HepG2 (cell line): ENCODE measurements at regions of chr2 and their contacts with region 1.

Region 1: DNA sequence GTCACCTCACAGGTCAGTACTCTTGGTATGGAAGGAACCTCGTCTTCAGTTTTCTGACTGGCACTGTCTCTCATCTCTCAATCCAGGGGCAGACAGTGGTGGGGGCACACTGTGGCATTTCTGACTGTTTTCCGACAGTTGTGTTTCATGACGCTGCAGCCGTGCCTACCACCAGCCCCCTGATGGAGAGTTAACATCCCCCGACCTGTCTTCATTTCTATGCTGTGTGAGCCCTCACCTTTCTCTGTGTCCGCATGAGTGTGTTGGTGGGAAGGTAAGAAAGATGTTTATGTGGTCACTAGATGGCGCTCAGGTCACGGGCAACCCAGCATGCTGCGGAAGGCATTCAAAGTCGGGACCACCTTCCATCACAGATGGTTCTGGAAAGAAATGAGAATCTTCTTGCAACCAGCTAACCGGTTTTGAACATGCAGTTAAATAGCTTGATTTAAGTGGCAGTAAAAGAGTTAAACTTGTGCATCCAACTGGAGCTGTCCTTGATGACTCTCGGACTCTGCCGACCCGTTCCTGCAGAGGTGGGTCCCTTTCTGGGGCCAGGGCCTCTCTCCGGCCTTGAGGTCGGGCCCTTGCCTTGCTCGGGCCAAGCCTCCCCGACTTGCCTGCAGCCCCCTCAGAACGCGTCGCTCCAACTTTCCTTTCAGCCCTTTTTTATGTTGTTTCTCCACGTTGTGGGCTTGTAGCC is 92.4 kb downstream of the DYSF start:
- DNase-seq: peak; percentile 64
- ATAC-seq: peak; percentile 86
- H3K4me3 ChIP-seq: peak overlapping the region in 2 of 3 experiments; percentile 10 to 29; a peak in 2 of 6 replicates
- H3K27ac ChIP-seq: no peak overlapping the region
- H3K4me1 ChIP-seq: peaks cover 37% of the 10 kb centered on the region
- H3K27me3 ChIP-seq: peaks cover 2 to 31% of the 10 kb centered on the region in 2 experiments; a peak in 4 of 5 replicates
- CTCF ChIP-seq: peak; percentile 97
- EP300 ChIP-seq: no peak
- POLR2A ChIP-seq: no peak
- RAD21 ChIP-seq: peak; percentile 88

Region 2: GRCh38 chr2:71452565-71452964 is 93.2 kb before region 1 on chr2:
- CTCF ChIA-PET with region 1: no interaction called
- POLR2A ChIA-PET with region 1: no interaction called
- in situ Hi-C with region 1: no loop called
- intact Hi-C with region 1: no loop called
- DNase-seq: no peak
- ATAC-seq: peak; percentile 65
- H3K4me3 ChIP-seq: no peak overlapping the region
- H3K27ac ChIP-seq: no peak overlapping the region
- H3K4me1 ChIP-seq: peaks cover 22% of the 10 kb centered on the region
- H3K27me3 ChIP-seq: peaks cover 2 to 9% of the 10 kb centered on the region in 2 experiments; a peak in 3 of 5 replicates
- CTCF ChIP-seq: no peak
- EP300 ChIP-seq: no peak
- POLR2A ChIP-seq: no peak
- RAD21 ChIP-seq: no peak

Region 3: DNA sequence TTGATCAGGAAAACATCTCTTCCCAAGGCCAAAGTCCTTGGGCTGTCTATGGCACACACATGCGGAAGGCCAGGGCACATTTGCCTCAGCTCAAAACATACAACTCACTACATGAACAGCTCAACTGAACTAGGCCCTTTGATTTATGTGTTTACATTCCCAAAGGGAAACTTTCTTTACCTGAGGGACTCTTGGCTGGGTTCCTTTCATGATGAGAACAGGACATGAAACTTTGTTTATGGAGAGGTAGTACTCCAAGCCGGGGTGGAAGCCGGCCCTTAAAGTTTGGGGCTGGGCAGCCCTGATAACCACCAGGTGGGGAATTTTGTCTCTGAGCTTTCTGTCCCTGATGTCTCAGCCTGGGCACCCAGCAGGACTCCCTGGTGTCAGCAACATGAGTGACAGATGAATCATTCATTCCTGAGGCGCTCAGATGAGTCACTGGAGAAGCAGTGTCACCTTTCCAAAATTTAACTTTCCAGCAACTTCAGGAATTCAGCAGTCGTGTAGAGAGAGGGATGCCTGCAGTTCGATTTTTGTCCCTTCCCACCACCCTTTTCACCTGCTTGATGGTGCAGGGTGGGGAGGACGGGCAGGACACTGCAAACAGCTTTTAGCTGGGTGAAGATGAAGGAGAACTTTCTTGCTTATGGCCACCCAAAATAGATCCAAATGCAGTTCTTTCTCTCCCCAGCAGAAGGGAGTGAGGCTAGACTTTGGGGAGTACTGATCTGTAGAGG is 239.2 kb after region 1 on chr2:
- CTCF ChIA-PET with region 1: no interaction called
- POLR2A ChIA-PET with region 1: no interaction called
- in situ Hi-C with region 1: loop called (anchors 5 kb)
- intact Hi-C with region 1: no loop called
- DNase-seq: peak; percentile 33
- ATAC-seq: peak; percentile 69
- H3K4me3 ChIP-seq: no peak overlapping the region
- H3K27ac ChIP-seq: no peak overlapping the region
- H3K4me1 ChIP-seq: peaks cover 26% of the 10 kb centered on the region
- H3K27me3 ChIP-seq: peaks cover 0 to 4% of the 10 kb centered on the region in 2 experiments; a peak in 2 of 5 replicates
- CTCF ChIP-seq: no peak
- EP300 ChIP-seq: no peak
- POLR2A ChIP-seq: no peak
- RAD21 ChIP-seq: no peak

Region 4: DNA sequence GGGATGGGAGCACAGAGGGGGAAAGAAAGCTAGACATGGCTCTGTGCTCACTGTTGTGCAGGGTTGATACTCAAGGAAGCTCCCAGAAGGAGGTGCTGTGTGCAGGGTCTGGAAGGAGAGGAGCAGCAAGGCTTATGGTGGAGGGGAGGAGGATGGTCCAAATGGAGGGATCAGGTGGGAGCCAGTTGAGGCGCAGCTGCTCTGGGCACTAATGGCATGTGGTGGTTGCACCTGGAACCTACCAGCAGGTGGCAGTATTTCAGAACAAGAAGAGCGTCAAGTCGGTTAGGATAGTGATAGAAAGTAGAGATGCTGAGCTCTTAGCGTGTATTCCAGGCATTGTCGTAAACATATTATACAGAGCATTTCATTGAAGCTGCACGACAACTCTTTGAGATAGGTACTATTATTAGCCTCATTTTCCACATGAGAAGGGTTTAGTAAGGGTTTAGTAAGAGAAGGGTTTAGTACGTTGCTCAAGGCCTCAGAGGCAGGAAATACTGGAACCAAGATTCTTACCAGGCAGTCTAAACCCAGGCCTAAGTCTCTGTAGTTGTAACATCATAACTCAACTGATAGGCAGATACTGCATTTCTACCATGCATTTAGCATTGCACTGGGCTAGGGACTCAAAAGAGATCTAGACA is 378.3 kb after region 1 on chr2:
- CTCF ChIA-PET with region 1: interaction called, 3 read pairs
- POLR2A ChIA-PET with region 1: no interaction called
- in situ Hi-C with region 1: no loop called
- intact Hi-C with region 1: loop called (anchors 5 kb)
- DNase-seq: peak; percentile 76
- ATAC-seq: peak; percentile 89
- H3K4me3 ChIP-seq: no peak overlapping the region
- H3K27ac ChIP-seq: no peak overlapping the region
- H3K4me1 ChIP-seq: no peaks in the 10 kb centered on the region
- H3K27me3 ChIP-seq: peaks cover 5 to 45% of the 10 kb centered on the region in 2 experiments; a peak in 4 of 5 replicates
- CTCF ChIP-seq: peak; percentile 93
- EP300 ChIP-seq: no peak
- POLR2A ChIP-seq: no peak
- RAD21 ChIP-seq: peak; percentile 78; the same call in 1 of the 2 replicates

Region 5: DNA sequence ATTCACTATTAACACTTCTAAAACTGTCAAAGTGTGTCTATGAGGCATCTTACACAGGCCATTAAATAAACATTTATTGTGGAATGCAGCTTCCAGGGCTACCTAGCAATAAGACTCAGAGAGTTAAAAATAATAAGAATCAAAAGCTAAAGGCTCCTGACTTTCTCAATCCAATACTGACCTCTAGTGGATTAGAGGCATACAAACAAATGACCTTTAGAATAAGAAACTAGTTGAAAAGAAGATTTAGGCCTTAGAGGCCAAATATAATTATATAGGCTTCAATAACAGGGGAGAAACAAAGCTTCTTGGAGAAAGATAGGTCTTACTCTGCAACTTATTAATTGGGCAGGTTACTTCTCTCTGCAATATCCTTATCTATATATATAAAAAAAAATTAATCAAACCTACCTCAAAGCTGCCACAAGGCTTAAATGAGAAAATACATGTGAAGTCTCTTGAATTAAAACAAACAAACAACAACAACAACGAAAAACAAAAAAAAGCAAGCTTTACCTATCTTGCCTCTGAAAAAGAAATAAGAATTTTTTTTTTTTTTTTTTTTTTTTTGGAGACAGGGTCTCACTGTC is 1034.0 kb after region 1 on chr2:
- CTCF ChIA-PET with region 1: no interaction called
- POLR2A ChIA-PET with region 1: no interaction called
- in situ Hi-C with region 1: loop called (anchors 10 kb)
- intact Hi-C with region 1: loop called (anchors 1 kb)
- DNase-seq: peak; percentile 70
- ATAC-seq: no peak
- H3K4me3 ChIP-seq: no peak overlapping the region
- H3K27ac ChIP-seq: no peak overlapping the region
- H3K4me1 ChIP-seq: peaks cover 7% of the 10 kb centered on the region
- H3K27me3 ChIP-seq: no peaks in the 10 kb centered on the region
- CTCF ChIP-seq: peak; percentile 71
- EP300 ChIP-seq: no peak
- POLR2A ChIP-seq: no peak
- RAD21 ChIP-seq: peak; percentile 81

Region 6: DNA sequence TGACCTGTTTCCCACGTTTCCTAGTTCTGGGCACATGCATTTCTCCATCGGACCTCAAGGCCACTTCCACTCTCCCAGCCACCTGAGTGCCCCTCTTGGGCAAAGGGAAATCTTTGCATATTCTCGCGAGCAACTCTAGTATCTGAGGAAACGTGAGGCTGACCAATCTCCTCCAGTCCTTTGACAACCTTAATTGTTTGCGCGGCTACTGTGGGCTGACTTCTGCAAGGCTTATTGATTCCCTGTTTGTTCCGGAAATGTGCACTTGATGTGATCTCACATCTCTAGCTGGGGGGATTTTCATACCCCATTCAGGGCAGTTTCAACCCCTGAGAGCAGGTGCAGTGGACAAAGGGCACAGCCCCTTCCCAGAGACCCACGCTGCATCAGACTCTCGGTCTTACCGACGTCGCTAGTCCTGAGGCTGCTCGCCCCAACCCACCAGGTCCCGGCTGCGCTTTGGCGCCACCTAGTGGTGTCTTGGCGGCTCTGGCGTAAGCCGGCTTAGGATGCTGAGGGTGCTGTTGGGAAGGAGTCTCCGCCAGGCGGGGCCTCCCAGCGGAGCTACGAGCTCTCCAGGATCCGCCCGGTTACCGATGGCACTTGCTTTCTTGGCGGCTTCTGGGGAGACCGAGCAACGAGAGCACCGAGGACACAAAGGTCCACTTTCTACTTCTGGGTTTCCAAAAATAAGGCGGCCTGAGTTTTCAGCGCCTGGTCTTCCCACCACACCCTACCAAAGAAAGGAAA is 1316.7 kb after region 1 on chr2:
- CTCF ChIA-PET with region 1: no interaction called
- POLR2A ChIA-PET with region 1: no interaction called
- in situ Hi-C with region 1: loop called (anchors 25 kb)
- intact Hi-C with region 1: no loop called
- DNase-seq: peak; percentile 82
- ATAC-seq: peak; percentile 99
- H3K4me3 ChIP-seq: peak overlapping the region; percentile 31 to 60 (median 51)
- H3K27ac ChIP-seq: no peak overlapping the region
- H3K4me1 ChIP-seq: peaks cover 12% of the 10 kb centered on the region
- H3K27me3 ChIP-seq: peaks cover 0 to 30% of the 10 kb centered on the region in 2 experiments; a peak in 3 of 5 replicates
- CTCF ChIP-seq: peak; percentile 100
- EP300 ChIP-seq: no peak; a peak in 1 of 4 replicates
- POLR2A ChIP-seq: no peak
- RAD21 ChIP-seq: peak; percentile 94